ENCODE measurements at regions of chr4 and their contacts with region 1.

Region 1: GRCh38 chr4:85084380-85085094 is 118.0 kb upstream of the WDFY3 start:
- DNase-seq: peak; percentile 32

Region 2: GRCh38 chr4:85370430-85371032 is 286.0 kb after region 1 on chr4:
- CTCF ChIA-PET with region 1: interaction called, 11 read pairs
- POLR2A ChIA-PET with region 1: no interaction called
- DNase-seq: peak; percentile 22

Measured in HEK293T (cell line).